ENCODE measurements at regions of chr1 and their contacts with region 1.

Region 1: DNA sequence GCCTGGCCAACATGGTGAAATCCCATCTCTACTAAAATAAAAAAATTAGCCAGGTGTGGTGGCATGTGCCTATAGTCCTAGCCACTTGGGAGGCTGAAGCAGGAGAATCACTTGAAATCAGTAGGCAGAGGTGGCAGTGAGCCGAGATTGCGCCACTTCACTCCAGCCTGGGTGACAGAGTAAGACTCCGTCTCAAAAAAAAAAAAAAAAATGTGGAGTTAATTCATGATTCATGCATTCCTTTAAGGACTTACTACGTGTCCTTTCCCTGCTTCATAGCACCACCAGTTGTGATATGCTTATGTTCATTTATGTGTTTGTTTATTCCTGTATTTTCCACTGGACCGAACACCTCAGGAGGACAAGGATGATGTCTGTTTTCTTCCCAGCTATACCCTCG is 12.7 kb upstream of the PRELP start:
- DNase-seq: no peak
- ATAC-seq: no peak
- H3K4me3 ChIP-seq: no peak overlapping the region
- H3K27ac ChIP-seq: peak overlapping the region in 4 of 10 donors; percentile 14 to 75 (median 50)
- H3K4me1 ChIP-seq: peaks cover 4 to 48% (median 35%) of the 10 kb centered on the region in 9 donors
- H3K27me3 ChIP-seq: peaks cover 0 to 14% (median 0%) of the 10 kb centered on the region in 7 donors
- CTCF ChIP-seq: no peak

Region 2: DNA sequence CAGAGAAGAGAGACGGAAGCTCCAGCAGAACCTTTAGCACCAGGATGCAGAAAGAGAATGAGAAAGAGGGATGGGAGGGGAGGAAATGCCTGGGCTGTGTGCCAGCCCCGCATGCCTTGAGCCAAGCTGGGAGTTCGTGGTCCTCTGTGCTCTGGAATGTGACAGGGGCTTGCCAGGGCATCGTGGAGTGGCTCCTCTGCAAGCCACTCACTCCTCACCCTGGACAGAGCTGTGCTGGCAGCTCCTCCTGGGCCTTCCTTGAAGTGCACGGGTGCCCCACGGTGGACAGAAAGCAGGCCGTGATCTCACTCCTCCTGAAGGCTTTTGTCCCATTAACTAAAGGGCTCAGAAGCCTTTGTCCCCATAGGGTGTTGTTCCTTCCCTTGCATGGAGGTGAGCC is 22.1 kb before region 1 on chr1:
- intact Hi-C with region 1: no loop called
- DNase-seq: peak; percentile 69 to 73
- ATAC-seq: peak; percentile 91 to 97 (median 93)
- H3K4me3 ChIP-seq: no peak overlapping the region
- H3K27ac ChIP-seq: peak overlapping the region in 4 of 10 donors; percentile 20 to 70 (median 45)
- H3K4me1 ChIP-seq: peaks cover 7 to 31% (median 9%) of the 10 kb centered on the region in 9 donors
- H3K27me3 ChIP-seq: no peaks in the 10 kb centered on the region
- CTCF ChIP-seq: peak; percentile 40 to 77 (median 67)

Region 3: GRCh38 chr1:203492082-203492747 is 29.3 kb after region 1 on chr1:
- intact Hi-C with region 1: loop called in 1 of 10 experiments (anchors 1 kb)
- DNase-seq: no peak
- ATAC-seq: no peak
- H3K4me3 ChIP-seq: no peak overlapping the region
- H3K27ac ChIP-seq: no peak overlapping the region
- H3K4me1 ChIP-seq: peaks cover 0 to 12% (median 4%) of the 10 kb centered on the region in 9 donors
- H3K27me3 ChIP-seq: no peaks in the 10 kb centered on the region
- CTCF ChIP-seq: no peak

Region 4: DNA sequence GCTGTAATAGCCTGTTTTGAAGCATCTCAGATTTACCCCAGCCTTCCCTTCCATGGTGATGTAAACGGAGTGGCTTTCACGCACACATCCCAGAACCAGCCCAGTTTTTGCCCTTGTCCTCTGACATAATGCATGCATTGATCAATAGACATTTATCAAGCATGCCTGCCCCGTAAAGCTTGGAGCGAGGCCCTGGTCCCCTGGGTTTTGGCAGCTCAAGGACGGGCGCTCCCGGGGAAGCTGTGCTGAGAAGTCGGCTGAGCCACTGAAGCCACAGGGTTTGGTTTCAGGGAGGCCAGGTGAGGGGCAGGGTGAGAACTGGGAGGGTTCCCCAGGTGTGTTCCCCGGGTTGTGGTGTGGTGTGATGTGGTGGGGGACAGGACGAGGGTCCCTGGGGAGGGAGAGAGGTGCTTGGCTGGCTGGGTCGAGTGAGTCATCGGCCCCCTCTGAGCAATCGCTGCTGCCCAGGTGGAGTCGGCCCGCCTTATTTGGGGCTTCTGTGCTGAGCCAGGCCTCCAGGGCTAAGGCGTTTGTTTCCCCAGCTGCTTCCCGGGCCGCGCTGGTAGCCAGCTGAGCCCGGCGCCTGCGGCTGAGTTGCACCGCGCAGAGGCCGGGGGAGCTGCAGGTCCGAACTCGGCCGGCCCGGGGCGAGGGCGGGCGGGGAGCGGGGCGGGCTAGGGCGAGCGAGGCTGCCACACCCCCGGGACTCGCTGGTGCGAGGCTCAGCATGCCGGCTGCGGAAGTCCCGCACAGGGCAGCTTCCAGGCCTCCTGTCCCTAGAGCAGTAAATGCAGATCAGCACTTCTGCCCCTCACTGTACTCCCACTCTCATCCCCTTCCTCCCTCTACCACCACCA is 187.3 kb after region 1 on chr1:
- intact Hi-C with region 1: no loop called
- DNase-seq: peak in 1 of 2 donors; percentile 70
- ATAC-seq: peak; percentile 77 to 85 (median 81)
- H3K4me3 ChIP-seq: peak overlapping the region in 9 of 10 donors; percentile 1 to 43 (median 36)
- H3K27ac ChIP-seq: peak overlapping the region in 9 of 10 donors; percentile 16 to 74 (median 56)
- H3K4me1 ChIP-seq: peaks cover 11 to 98% (median 80%) of the 10 kb centered on the region in 9 donors
- H3K27me3 ChIP-seq: no peaks in the 10 kb centered on the region
- CTCF ChIP-seq: peak in 1 of 9 donors; percentile 17